Panc1 (cell line): ENCODE measurements at regions of chr2 and their contacts with region 1.

Region 1: DNA sequence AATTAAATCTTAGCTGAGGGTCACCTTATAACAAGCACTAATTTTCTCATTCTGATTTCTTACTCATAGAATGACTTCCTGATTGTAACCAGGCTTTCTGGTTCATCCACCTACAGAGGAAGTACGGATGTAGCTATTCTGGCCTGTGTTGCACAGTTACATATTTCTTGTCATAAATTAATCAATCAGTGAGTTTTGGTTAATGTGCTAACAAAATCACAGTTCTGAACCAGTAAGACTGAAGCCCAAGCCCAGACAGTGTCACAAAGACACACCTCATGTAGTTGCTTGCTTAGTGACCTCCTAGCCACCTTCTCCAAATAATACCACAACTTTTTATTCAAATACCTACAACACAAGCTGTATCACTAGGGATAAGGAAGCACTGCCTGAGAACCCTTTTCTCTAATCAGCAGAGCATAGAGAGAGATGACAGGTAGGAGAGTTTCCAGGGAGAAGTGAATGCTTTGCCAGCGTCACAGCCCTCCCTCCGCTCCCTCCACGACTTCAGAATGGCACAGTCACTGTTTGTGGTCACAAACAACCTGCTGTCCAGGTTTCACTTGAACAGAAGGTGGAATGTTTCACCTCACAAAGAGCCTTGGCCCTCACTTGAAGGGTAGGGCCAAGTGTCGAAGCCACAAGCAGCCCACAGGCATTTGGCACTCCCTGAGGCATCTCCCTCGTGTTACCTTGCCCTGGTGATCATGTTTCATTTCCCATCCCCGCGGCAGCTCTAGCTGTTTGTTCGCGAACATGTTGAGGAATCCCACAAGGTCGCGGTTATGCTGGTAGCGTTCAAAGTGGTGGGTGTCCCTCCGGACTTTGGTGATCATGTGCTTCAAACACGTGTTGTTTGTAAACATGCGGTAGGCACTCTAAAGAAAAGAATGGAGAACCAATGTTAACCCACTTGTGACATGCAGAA is 120.8 kb upstream of the STK17B start:
- DNase-seq: no peak
- ATAC-seq: no peak
- H3K4me3 ChIP-seq: no peak overlapping the region
- H3K27ac ChIP-seq: no peak overlapping the region; the same call in 1 of the 2 replicates
- H3K4me1 ChIP-seq: no peaks in the 10 kb centered on the region
- H3K27me3 ChIP-seq: no peaks in the 10 kb centered on the region
- CTCF ChIP-seq: no peak

Region 2: DNA sequence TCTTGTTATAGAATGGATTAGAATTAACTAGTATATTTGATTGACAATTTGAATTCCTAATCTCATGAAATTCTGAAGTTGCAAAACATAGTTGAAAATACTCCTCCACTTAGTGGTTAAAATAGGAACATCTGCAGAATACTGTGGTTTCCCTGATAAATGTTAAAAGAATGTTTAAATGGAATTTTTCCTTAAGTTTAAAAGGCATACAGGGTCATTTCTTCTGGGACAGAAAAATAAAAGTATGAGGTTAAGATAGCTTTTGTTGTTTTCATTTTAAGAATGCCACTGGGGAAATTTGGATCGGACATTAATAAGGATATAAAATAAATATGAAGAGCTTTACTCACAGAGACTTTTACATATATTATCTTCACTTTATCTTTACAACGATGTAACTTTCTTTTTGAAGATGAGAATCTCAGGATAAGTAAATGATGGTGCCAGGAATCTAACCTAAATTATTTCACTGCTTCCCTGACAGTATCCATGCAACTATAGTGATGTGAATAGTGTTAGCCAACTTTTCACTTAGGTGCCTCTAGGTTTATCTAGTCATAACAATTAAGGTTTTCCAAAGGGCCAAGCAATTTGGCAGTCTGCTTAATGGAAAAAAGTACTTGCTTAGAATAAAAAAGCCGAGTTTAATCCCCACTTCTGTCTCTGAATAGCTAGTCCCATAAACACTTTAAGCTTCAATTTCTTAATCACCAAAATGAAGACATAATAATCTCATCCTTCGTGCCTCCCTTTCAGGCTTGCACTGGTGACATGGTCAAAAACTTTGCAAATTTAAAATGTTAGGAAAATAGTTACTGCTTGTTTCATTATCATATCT is 31.1 kb after region 1 on chr2:
- CTCF ChIA-PET with region 1: interaction called, 10 read pairs
- POLR2A ChIA-PET with region 1: no interaction called
- in situ Hi-C with region 1: no loop called
- intact Hi-C with region 1: no loop called
- DNase-seq: no peak
- ATAC-seq: no peak
- H3K4me3 ChIP-seq: no peak overlapping the region
- H3K27ac ChIP-seq: peak overlapping the region; percentile 6; the same call in 1 of the 2 replicates
- H3K4me1 ChIP-seq: no peaks in the 10 kb centered on the region; the same call in 1 of the 2 replicates
- H3K27me3 ChIP-seq: no peaks in the 10 kb centered on the region
- CTCF ChIP-seq: no peak

Region 3: DNA sequence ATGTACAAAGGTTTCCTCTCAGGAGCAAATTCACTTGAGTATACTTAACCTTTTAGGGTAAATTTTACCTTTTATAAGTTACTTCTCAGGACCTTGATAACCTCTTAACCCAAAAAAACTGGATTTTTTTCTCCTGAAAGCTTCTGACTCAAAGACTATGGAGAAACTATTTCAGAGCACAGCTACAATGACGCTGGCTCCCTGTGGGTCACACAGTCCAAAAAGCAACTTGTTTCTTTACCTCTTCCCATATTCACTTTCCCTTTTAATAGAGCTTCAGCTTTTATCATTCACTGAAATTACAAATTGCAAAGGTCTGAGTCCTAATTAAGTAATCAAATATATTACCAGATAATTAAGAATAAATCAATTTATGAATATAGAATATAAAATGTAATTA is 475.0 kb after region 1 on chr2:
- CTCF ChIA-PET with region 1: no interaction called
- POLR2A ChIA-PET with region 1: no interaction called
- in situ Hi-C with region 1: no loop called
- intact Hi-C with region 1: loop called (anchors 10 kb)
- DNase-seq: no peak
- ATAC-seq: no peak
- H3K4me3 ChIP-seq: no peak overlapping the region
- H3K27ac ChIP-seq: no peak overlapping the region
- H3K4me1 ChIP-seq: no peaks in the 10 kb centered on the region
- H3K27me3 ChIP-seq: no peaks in the 10 kb centered on the region
- CTCF ChIP-seq: no peak